ENCODE measurements at regions of chr1 and their contacts with region 1.

Region 1: DNA sequence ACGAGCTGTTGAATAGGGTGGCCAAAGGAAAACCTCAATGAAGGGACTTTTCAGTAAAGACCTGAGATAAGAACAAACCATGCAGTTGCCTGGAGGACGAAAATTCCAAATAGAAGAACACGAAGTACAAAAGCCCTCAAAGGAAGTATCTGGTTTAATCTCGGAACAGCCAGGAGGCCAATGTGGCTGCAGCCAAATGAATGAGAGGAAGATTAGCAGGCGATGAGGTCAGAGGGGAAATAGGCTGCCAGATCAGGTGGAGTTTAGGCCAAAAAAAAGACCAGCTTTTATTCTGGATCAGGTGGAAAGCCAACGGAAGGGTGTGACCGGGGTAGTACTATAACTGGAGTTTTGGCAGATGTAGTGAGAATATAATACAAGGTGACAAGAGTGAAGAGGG is 43.7 kb downstream of the SRSF11 start:
- DNase-seq: no peak
- H3K4me3 ChIP-seq: no peak overlapping the region
- H3K27ac ChIP-seq: no peak overlapping the region
- H3K4me1 ChIP-seq: no peaks in the 10 kb centered on the region
- H3K27me3 ChIP-seq: no peaks in the 10 kb centered on the region
- CTCF ChIP-seq: no peak

Region 2: GRCh38 chr1:70436622-70437251 is 171.9 kb after region 1 on chr1:
- CTCF ChIA-PET with region 1: no interaction called
- dilution Hi-C with region 1: no loop called
- in situ Hi-C with region 1: loop called in 1 of 2 experiments (anchors 25 kb)
- intact Hi-C with region 1: no loop called
- DNase-seq: no peak
- H3K4me3 ChIP-seq: no peak overlapping the region
- H3K27ac ChIP-seq: no peak overlapping the region
- H3K4me1 ChIP-seq: no peaks in the 10 kb centered on the region
- H3K27me3 ChIP-seq: no peaks in the 10 kb centered on the region
- CTCF ChIP-seq: peak in 1 of 2 donors; percentile 31

Region 3: DNA sequence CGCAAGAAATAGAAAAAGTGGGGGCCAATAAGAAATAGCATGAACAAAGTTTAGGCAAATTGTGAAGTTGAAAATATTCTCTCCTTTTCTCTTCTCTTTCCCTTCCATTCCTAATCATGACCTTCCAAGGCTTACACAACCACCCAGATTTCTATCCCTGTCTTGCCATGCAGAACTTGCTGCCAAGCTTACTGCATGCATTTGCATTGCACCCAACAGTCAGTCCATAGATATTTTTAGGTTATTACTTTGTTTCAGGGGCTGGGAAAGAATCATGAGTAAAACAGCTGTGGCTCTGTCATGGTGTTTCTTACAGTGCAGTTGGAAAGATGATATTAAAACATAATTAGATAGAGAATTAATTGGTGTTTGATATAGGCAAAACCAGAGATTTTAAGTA is 563.3 kb after region 1 on chr1:
- CTCF ChIA-PET with region 1: no interaction called
- dilution Hi-C with region 1: no loop called
- in situ Hi-C with region 1: no loop called
- intact Hi-C with region 1: no loop called
- DNase-seq: no peak
- H3K4me3 ChIP-seq: no peak overlapping the region
- H3K27ac ChIP-seq: no peak overlapping the region
- H3K4me1 ChIP-seq: no peaks in the 10 kb centered on the region
- H3K27me3 ChIP-seq: no peaks in the 10 kb centered on the region
- CTCF ChIP-seq: no peak

Measured in mammary epithelial cell (primary cell).